Naive thymus-derived CD4-positive, alpha-beta T cell (primary cell): ENCODE measurements at regions of chr7 and their contacts with region 1.

Region 1: GRCh38 chr7:24572997-24573625 is at the start of gene PALS2:
- DNase-seq: peak; percentile 78 to 88 (median 85)
- ATAC-seq: peak; percentile 88
- H3K4me3 ChIP-seq: peak within 1 kb of the TSS; percentile 78
- H3K4me3 Mint-ChIP-seq: peak within 1 kb of the TSS; percentile 93 to 100 (median 94)
- H3K27ac ChIP-seq: peak within 1 kb of the TSS; percentile 77
- H3K27ac Mint-ChIP-seq: peak within 1 kb of the TSS; percentile 84 to 96 (median 94)
- H3K4me1 ChIP-seq: peaks cover 13 to 24% of the 10 kb centered on the region in 2 donors
- H3K4me1 Mint-ChIP-seq: peaks cover 21 to 52% (median 42%) of the 10 kb centered on the region in 7 donors
- H3K27me3 ChIP-seq: no peaks in the 10 kb centered on the region
- H3K27me3 Mint-ChIP-seq: peaks cover 0 to 45% (median 0%) of the 10 kb centered on the region in 5 donors
- total RNA-seq, gene PALS2: 15.4 to 58.4 (median 34.0) TPM

Region 2: DNA sequence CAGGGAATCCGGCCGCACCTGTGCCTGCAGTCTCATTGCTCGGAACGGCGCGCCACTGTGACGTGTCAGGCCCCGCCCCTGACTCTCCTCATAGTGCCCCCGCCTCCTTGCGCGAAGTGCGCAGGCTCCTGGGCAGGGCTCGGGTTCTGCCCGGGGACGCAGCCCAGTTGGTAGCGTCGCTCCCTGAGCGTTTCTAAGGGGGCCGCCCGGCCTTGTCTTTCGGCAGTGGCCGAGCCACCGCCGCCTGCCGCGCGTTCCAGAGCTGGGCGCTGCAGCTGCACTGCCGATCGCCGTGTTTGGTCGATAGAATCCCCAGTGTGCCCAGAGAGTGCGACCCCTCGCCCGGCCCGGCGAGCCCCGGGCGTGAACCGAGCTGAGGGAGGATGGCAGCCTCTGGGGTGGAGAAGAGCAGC is 1467.5 kb before region 1 on chr7 and contains the start of gene KLHL7:
- CTCF ChIA-PET with region 1: no interaction called
- POLR2A ChIA-PET with region 1: no interaction called
- intact Hi-C with region 1: loop called in 1 of 2 experiments (anchors 2 kb)
- DNase-seq: peak; percentile 90 to 95 (median 93)
- ATAC-seq: peak; percentile 99
- H3K4me3 ChIP-seq: peak within 1 kb of the TSS; percentile 93
- H3K4me3 Mint-ChIP-seq: peak within 1 kb of the TSS; percentile 90 to 99 (median 96)
- H3K27ac ChIP-seq: peak within 1 kb of the TSS; percentile 90
- H3K27ac Mint-ChIP-seq: peak within 1 kb of the TSS; percentile 91 to 97 (median 96)
- H3K4me1 ChIP-seq: peaks cover 4 to 18% of the 10 kb centered on the region in 2 donors
- H3K4me1 Mint-ChIP-seq: peaks cover 33 to 51% (median 47%) of the 10 kb centered on the region in 7 donors
- H3K27me3 ChIP-seq: no peaks in the 10 kb centered on the region
- H3K27me3 Mint-ChIP-seq: no peaks in the 10 kb centered on the region
- total RNA-seq, gene KLHL7: 16.9 to 22.9 (median 22.7) TPM

Region 3: GRCh38 chr7:23546897-23547572 is 1026.1 kb before region 1 on chr7:
- CTCF ChIA-PET with region 1: no interaction called
- POLR2A ChIA-PET with region 1: no interaction called
- intact Hi-C with region 1: loop called (anchors 2 to 5 kb)
- DNase-seq: peak; percentile 37 to 89 (median 82)
- ATAC-seq: peak; percentile 98
- H3K4me3 ChIP-seq: no peak overlapping the region
- H3K4me3 Mint-ChIP-seq: no peak overlapping the region
- H3K27ac ChIP-seq: no peak overlapping the region
- H3K27ac Mint-ChIP-seq: peak overlapping the region in 6 of 9 donors; percentile 22 to 90 (median 40)
- H3K4me1 ChIP-seq: no peaks in the 10 kb centered on the region
- H3K4me1 Mint-ChIP-seq: peaks cover 0 to 14% (median 5%) of the 10 kb centered on the region in 7 donors
- H3K27me3 ChIP-seq: no peaks in the 10 kb centered on the region
- H3K27me3 Mint-ChIP-seq: peaks cover 0 to 5% (median 0%) of the 10 kb centered on the region in 5 donors

Region 4: GRCh38 chr7:24560772-24561171 is 12.3 kb before region 1 on chr7:
- CTCF ChIA-PET with region 1: interaction called, 4 read pairs
- POLR2A ChIA-PET with region 1: interaction called, 7 read pairs
- intact Hi-C with region 1: loop called in 1 of 2 experiments (anchors 1 kb)
- DNase-seq: peak in 7 of 9 donors; percentile 21 to 67 (median 55)
- ATAC-seq: peak; percentile 85
- H3K4me3 ChIP-seq: no peak overlapping the region
- H3K4me3 Mint-ChIP-seq: peak overlapping the region in 9 of 10 donors; percentile 23 to 74 (median 46)
- H3K27ac ChIP-seq: no peak overlapping the region
- H3K27ac Mint-ChIP-seq: peak overlapping the region; percentile 1 to 77 (median 43)
- H3K4me1 ChIP-seq: peaks cover 0 to 16% of the 10 kb centered on the region in 2 donors
- H3K4me1 Mint-ChIP-seq: peaks cover 10 to 25% (median 22%) of the 10 kb centered on the region in 7 donors
- H3K27me3 ChIP-seq: no peaks in the 10 kb centered on the region
- H3K27me3 Mint-ChIP-seq: peaks cover 0 to 16% (median 0%) of the 10 kb centered on the region in 5 donors

Region 5: DNA sequence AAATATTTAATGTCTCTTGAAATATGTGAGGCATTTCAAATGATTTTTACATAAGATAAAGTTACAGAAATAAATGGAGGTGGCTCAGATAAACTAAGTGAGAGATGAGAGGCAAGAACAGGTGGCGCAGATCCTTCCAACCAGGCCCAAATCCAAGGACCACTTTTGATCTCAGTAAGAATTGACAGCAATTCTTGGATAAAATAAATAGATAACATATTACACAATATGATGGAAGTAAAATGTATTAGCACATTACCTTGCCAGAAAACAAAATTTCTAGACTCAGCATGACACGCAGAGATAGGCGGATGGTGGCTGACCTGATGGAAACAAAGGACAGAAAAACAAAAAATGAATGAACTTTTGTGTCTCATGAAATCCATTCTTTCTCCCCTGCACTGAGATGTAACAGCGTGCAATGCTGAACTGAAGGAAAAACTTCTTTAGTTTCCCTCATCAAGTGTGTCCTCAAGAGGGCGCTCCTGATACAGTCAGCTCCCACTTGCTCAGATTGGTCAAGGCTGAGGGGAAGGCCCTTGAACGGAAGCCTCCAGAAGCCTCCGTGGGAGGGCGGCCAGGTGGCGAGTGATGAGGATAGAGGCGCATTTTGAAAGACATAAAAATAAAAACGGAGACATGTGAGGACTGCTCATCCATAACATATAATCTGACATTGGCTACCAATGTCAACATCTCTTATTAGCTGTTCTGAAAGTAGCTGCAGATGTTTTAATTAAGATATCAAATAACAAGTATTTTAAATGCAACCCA is 247.0 kb after region 1 on chr7:
- CTCF ChIA-PET with region 1: no interaction called
- POLR2A ChIA-PET with region 1: no interaction called
- intact Hi-C with region 1: loop called (anchors 2 to 10 kb)
- DNase-seq: peak; percentile 33 to 72 (median 68)
- ATAC-seq: peak; percentile 58
- H3K4me3 ChIP-seq: peak overlapping the region; percentile 24
- H3K4me3 Mint-ChIP-seq: peak overlapping the region; percentile 70 to 93 (median 83)
- H3K27ac ChIP-seq: peak overlapping the region; percentile 70
- H3K27ac Mint-ChIP-seq: peak overlapping the region; percentile 91 to 99 (median 94)
- H3K4me1 ChIP-seq: peaks cover 27 to 28% of the 10 kb centered on the region in 2 donors
- H3K4me1 Mint-ChIP-seq: peaks cover 13 to 47% (median 45%) of the 10 kb centered on the region in 7 donors
- H3K27me3 ChIP-seq: no peaks in the 10 kb centered on the region
- H3K27me3 Mint-ChIP-seq: no peaks in the 10 kb centered on the region

Region 6: DNA sequence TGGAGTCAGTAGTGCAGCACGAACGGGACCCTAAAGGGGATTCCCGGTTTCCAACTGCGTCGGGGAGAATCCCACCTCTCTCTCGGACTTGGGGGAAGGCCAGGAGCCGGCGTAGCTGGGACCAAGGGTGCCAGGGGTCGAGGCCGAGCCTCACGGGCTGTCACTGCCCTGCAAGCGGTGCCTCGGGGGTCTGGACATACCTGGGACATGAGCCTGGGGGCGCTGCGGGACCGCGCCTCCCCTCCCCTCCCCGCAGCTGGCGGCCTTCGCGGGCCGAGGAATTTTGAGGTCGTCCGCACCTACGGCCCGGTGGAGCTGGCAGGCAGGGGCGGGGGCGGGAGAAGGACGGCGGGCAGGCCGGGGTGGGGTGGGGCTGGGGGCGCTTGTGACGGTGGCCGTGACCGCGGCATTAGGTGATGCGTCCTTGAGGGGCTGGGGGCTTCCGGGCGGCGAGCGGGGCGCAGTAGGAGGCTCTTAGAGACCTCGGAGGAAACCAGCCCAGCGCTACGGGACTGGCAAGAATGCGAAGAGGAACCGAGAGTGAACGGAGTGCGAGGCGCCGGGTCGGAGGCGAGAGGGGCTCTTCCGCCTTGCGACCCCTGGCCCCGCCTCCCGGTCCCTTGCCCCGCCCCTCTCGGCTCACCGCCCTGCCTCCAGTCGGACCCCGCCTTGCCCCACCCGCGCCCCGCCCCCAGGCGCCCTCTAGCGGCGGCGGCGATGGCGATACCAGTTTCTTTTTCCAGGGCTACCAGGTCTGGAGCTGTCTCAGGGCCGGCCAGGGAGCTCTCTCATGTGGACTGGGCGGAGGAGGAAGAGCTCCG is 606.9 kb after region 1 on chr7:
- CTCF ChIA-PET with region 1: no interaction called
- POLR2A ChIA-PET with region 1: no interaction called
- intact Hi-C with region 1: loop called in 1 of 2 experiments (anchors 5 kb)
- DNase-seq: peak; percentile 88 to 99 (median 94)
- ATAC-seq: peak; percentile 99
- H3K4me3 ChIP-seq: peak overlapping the region; percentile 75
- H3K4me3 Mint-ChIP-seq: peak overlapping the region; percentile 82 to 93 (median 88)
- H3K27ac ChIP-seq: peak overlapping the region; percentile 86
- H3K27ac Mint-ChIP-seq: peak overlapping the region; percentile 83 to 96 (median 92)
- H3K4me1 ChIP-seq: peaks cover 6 to 7% of the 10 kb centered on the region in 2 donors
- H3K4me1 Mint-ChIP-seq: peaks cover 13 to 31% (median 22%) of the 10 kb centered on the region in 7 donors
- H3K27me3 ChIP-seq: no peaks in the 10 kb centered on the region
- H3K27me3 Mint-ChIP-seq: peaks cover 0 to 12% (median 0%) of the 10 kb centered on the region in 5 donors